GM12878 (cell line): ENCODE measurements at regions of chr4 and their contacts with region 1.

Region 1: DNA sequence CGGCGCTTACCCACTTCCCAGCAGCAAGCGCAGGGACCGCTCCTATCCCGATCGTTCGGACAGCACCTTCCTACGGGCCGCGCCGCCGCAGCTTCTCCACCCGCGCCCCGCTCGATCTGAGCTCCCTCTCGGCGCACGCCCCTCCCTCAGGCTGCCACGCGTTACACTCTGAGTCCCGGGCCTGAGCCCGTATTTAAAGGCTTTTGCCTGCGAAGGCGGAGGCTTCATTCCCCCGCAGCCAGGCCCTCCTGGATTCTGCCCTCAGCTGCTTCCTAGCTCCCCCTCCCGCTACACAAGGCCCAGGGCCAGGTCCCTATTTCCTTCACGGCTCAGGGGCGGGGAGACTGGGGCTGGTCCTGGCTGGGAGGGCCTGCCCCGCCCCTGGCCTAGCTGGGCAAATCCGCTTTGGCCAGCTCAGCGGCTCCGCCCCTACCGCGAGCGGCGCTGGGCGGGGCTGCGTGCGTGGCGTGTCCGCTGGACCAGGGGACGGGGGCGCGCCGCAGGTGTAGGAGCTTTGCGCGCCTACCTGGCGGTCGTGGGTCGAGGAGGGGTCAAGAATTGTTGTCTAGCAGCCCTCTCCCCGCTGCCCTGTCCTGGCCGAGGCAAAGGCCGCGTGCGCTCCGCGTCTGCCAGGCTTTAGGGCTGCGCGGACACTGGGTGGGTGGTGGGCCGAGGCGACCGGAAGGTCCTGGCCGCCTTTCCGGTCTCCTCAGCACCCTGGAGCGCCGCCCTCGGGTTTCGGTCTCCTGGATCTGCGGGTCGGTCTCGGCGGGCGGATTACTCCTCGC is at the start of gene UGDH:
- DNase-seq: peak; percentile 82
- ATAC-seq: peak; percentile 98
- H3K4me3 ChIP-seq: peak within 1 kb of the TSS; percentile 95
- H3K27ac ChIP-seq: peak within 1 kb of the TSS; percentile 81
- H3K4me1 ChIP-seq: peaks cover 3% of the 10 kb centered on the region
- H3K27me3 ChIP-seq: no peaks in the 10 kb centered on the region
- CTCF ChIP-seq: peak in 2 of 3 experiments; percentile 2 to 34; a peak in 2 of 6 replicates
- EP300 ChIP-seq: no peak
- POLR2A ChIP-seq: peak; percentile 92
- RAD21 ChIP-seq: 0 out of 2 replicates have a peak, but pooled peaks have one; percentile 13
- polyA plus RNA-seq, gene UGDH: 11.1 to 11.3 TPM

Region 2: DNA sequence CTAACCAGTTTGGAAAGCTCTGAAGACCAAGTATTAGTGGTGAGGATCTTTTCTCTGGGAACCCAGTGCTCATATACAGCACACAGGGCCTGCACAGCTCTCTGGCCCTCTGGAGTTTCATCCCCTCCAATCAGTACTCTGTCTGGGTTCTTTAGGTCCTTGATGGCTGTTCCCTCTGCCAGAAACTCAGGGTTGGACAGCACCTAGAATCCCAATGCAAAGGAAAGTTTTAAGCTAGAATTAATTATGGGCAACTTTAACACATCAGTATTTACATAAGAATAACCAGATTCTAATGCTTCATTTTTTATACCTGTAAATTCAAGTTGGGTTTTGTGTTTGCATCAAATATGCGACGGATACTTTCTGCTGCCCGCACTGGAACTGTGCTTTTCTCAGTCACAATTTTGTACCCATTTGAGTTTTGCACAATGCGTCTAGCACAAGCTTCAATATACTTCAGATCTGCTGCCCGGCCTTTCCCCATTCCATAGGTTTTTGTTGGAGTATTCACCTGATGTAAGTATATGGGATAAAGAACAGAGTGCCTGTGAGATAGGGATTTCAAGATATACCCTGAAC is 17.0 kb before region 1 on chr4:
- CTCF ChIA-PET with region 1: interaction called, 3 read pairs
- POLR2A ChIA-PET with region 1: interaction called, 4 read pairs
- RAD21 ChIA-PET with region 1: interaction called, 3 read pairs
- SMC1A ChIA-PET with region 1: interaction called, 11 read pairs
- in situ Hi-C with region 1: no loop called
- intact Hi-C with region 1: no loop called
- DNase-seq: no peak
- ATAC-seq: no peak
- H3K4me3 ChIP-seq: no peak overlapping the region
- H3K27ac ChIP-seq: no peak overlapping the region
- H3K4me1 ChIP-seq: no peaks in the 10 kb centered on the region
- H3K27me3 ChIP-seq: no peaks in the 10 kb centered on the region
- CTCF ChIP-seq: no peak
- EP300 ChIP-seq: no peak
- POLR2A ChIP-seq: no peak
- RAD21 ChIP-seq: no peak

Region 3: GRCh38 chr4:39609454-39609931 is 82.0 kb after region 1 on chr4:
- CTCF ChIA-PET with region 1: no interaction called
- POLR2A ChIA-PET with region 1: interaction called, 4 read pairs
- RAD21 ChIA-PET with region 1: interaction called, 10 read pairs
- SMC1A ChIA-PET with region 1: interaction called, 13 read pairs
- in situ Hi-C with region 1: no loop called
- intact Hi-C with region 1: loop called (anchors 2 kb)
- DNase-seq: peak; percentile 96
- ATAC-seq: peak; percentile 91
- H3K4me3 ChIP-seq: 0 out of 2 replicates have a peak overlapping the region, but pooled peaks have one; percentile 39
- H3K27ac ChIP-seq: peak overlapping the region; percentile 80
- H3K4me1 ChIP-seq: peaks cover 49% of the 10 kb centered on the region
- H3K27me3 ChIP-seq: no peaks in the 10 kb centered on the region
- CTCF ChIP-seq: no peak
- EP300 ChIP-seq: peak; percentile 97 to 100
- POLR2A ChIP-seq: 0 out of 2 replicates have a peak, but pooled peaks have one; percentile 29
- RAD21 ChIP-seq: no peak; the same call in 1 of the 2 replicates

Region 4: GRCh38 chr4:39621582-39621981 is 94.1 kb after region 1 on chr4:
- CTCF ChIA-PET with region 1: no interaction called
- POLR2A ChIA-PET with region 1: interaction called, 14 read pairs
- RAD21 ChIA-PET with region 1: interaction called, 26 read pairs
- SMC1A ChIA-PET with region 1: interaction called, 7 read pairs
- in situ Hi-C with region 1: no loop called
- intact Hi-C with region 1: no loop called
- DNase-seq: no peak
- ATAC-seq: no peak
- H3K4me3 ChIP-seq: no peak overlapping the region
- H3K27ac ChIP-seq: no peak overlapping the region
- H3K4me1 ChIP-seq: peaks cover 38% of the 10 kb centered on the region
- H3K27me3 ChIP-seq: no peaks in the 10 kb centered on the region
- CTCF ChIP-seq: no peak
- EP300 ChIP-seq: no peak
- POLR2A ChIP-seq: no peak
- RAD21 ChIP-seq: no peak

Region 5: GRCh38 chr4:39638354-39639240 is 111.1 kb after region 1 on chr4 and contains the start of gene SMIM14:
- CTCF ChIA-PET with region 1: interaction called, 5 read pairs
- POLR2A ChIA-PET with region 1: interaction called, 5 read pairs
- RAD21 ChIA-PET with region 1: interaction called, 15 read pairs
- SMC1A ChIA-PET with region 1: interaction called, 13 read pairs
- in situ Hi-C with region 1: no loop called
- intact Hi-C with region 1: loop called (anchors 2 kb)
- DNase-seq: no peak
- ATAC-seq: peak; percentile 82
- H3K4me3 ChIP-seq: peak within 1 kb of the TSS; percentile 75
- H3K27ac ChIP-seq: peak within 1 kb of the TSS; percentile 43
- H3K4me1 ChIP-seq: peaks cover 5% of the 10 kb centered on the region; the same call in 1 of the 2 replicates
- H3K27me3 ChIP-seq: no peaks in the 10 kb centered on the region
- CTCF ChIP-seq: no peak
- EP300 ChIP-seq: peak; percentile 34 to 50; a peak in 1 of 4 replicates
- POLR2A ChIP-seq: peak; percentile 88
- RAD21 ChIP-seq: no peak; the same call in 1 of the 2 replicates
- polyA plus RNA-seq, gene SMIM14: 585 to 671 TPM

Region 6: GRCh38 chr4:39977489-39978377 is 450.3 kb after region 1 on chr4 and contains the start of gene PDS5A:
- CTCF ChIA-PET with region 1: interaction called, 5 read pairs
- POLR2A ChIA-PET with region 1: no interaction called
- RAD21 ChIA-PET with region 1: interaction called, 3 read pairs
- SMC1A ChIA-PET with region 1: no interaction called
- in situ Hi-C with region 1: no loop called
- intact Hi-C with region 1: loop called (anchors 5 kb)
- DNase-seq: peak; percentile 56
- ATAC-seq: peak; percentile 82
- H3K4me3 ChIP-seq: peak within 1 kb of the TSS; percentile 93
- H3K27ac ChIP-seq: peak within 1 kb of the TSS; percentile 95
- H3K4me1 ChIP-seq: peaks cover 3% of the 10 kb centered on the region
- H3K27me3 ChIP-seq: no peaks in the 10 kb centered on the region
- CTCF ChIP-seq: peak; percentile 84 to 99 (median 94)
- EP300 ChIP-seq: no peak
- POLR2A ChIP-seq: peak; percentile 79
- RAD21 ChIP-seq: peak; percentile 69
- polyA plus RNA-seq, gene PDS5A: 13.7 to 14.1 TPM